Gastrocnemius medialis (tissue), 4 donors: ENCODE measurements at regions of chr12 and their contacts with region 1.

Region 1: DNA sequence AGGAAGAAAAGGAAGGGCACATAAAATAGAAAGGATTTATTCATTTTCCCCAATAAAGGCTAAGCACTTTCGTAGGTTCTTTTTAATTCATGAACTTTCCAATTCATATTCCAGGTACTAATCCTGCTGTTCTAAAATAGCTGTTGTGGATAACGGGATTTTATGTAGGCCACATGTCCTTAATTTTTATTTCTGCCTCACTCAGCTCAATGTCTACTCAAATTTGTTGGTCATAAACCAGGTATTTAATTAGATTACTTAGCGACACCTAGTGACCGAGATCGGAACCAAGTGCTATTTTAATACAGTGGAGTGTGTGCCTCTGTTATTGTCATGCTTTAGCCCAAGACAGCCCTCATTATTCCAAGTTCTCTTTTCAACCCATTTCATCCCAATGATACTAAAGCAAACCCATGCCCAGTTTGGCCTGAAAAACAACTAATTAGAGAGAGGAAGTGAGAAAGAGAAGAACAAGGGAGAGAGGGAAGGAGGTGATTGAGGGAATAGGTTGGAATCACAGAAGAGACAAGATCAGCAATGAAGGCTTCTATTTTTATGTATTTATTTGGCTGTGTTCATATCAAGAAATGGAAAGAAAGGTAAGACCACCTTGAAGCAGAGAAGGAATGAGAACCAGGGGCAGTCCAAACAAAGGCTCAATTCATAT is 45.9 kb upstream of the IFNG-AS1 start:
- DNase-seq: peak; percentile 37 to 46
- ATAC-seq: peak; percentile 85
- H3K4me3 ChIP-seq: no peak overlapping the region
- H3K27ac ChIP-seq: peak overlapping the region; percentile 30 to 54 (median 44)
- H3K4me1 ChIP-seq: peaks cover 27 to 38% of the 10 kb centered on the region in 2 donors
- H3K27me3 ChIP-seq: no peaks in the 10 kb centered on the region
- CTCF ChIP-seq: peak; percentile 53 to 83 (median 73)
- POLR2A ChIP-seq: no peak

Region 2: GRCh38 chr12:67433385-67434175 is 509.8 kb before region 1 on chr12:
- in situ Hi-C with region 1: loop called in 2 of 4 experiments (anchors 10 to 25 kb)
- intact Hi-C with region 1: no loop called
- DNase-seq: no peak
- ATAC-seq: no peak
- H3K4me3 ChIP-seq: no peak overlapping the region
- H3K27ac ChIP-seq: peak overlapping the region in 2 of 4 donors; percentile 12 to 80
- H3K4me1 ChIP-seq: peaks cover 25 to 26% of the 10 kb centered on the region in 2 donors
- H3K27me3 ChIP-seq: no peaks in the 10 kb centered on the region
- CTCF ChIP-seq: no peak
- POLR2A ChIP-seq: no peak

Region 3: DNA sequence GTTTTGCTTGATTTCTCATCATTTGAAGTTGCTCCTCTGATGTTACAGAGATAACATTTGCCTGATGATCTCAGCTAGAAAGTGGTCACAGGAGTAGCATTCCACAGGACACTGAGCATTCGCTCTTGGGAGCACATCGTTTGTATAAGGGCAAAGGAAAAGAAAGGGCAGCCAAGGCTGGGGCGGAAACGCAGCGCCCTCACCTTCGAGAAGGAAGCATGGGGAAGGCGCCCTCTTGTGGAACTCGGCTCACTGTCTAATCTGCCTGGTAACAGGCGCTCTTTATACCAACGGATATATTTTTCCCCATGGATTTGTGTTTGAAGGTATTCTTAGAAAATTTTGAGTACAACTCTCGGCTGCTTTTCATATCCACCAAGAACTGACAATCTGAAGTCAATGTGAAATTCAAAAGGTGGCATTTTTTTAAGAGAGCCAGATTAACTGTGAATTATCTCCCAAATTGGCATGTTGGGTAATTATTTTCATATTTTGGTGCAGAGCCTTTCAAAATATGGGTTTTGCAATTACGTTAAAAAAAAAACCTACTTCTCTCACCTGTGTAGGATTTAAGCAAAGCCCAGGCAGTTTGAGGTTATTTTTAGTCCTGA is 501.5 kb before region 1 on chr12:
- in situ Hi-C with region 1: loop called in 2 of 4 experiments (anchors 10 to 25 kb)
- intact Hi-C with region 1: loop called (anchors 5 kb)
- DNase-seq: peak; percentile 78 to 88
- ATAC-seq: peak; percentile 95 to 99
- H3K4me3 ChIP-seq: peak overlapping the region; percentile 45 to 55 (median 50)
- H3K27ac ChIP-seq: peak overlapping the region; percentile 70 to 86 (median 76)
- H3K4me1 ChIP-seq: peaks cover 13 to 18% of the 10 kb centered on the region in 2 donors
- H3K27me3 ChIP-seq: no peaks in the 10 kb centered on the region
- CTCF ChIP-seq: peak; percentile 69 to 86 (median 75)
- POLR2A ChIP-seq: no peak

Region 4: GRCh38 chr12:67509666-67510384 is 433.5 kb before region 1 on chr12:
- in situ Hi-C with region 1: no loop called
- intact Hi-C with region 1: loop called (anchors 10 kb)
- DNase-seq: no peak
- ATAC-seq: no peak
- H3K4me3 ChIP-seq: no peak overlapping the region
- H3K27ac ChIP-seq: no peak overlapping the region
- H3K4me1 ChIP-seq: peaks cover 9 to 12% of the 10 kb centered on the region in 2 donors
- H3K27me3 ChIP-seq: no peaks in the 10 kb centered on the region
- CTCF ChIP-seq: no peak
- POLR2A ChIP-seq: no peak

Region 5: GRCh38 chr12:67648521-67649260 is 294.7 kb before region 1 on chr12 and contains the start of gene DYRK2:
- in situ Hi-C with region 1: loop called in 2 of 4 experiments (anchors 10 to 25 kb)
- intact Hi-C with region 1: loop called (anchors 2 kb)
- DNase-seq: peak; percentile 56 to 78
- ATAC-seq: peak; percentile 51
- H3K4me3 ChIP-seq: peak within 1 kb of the TSS; percentile 94 to 98 (median 98)
- H3K27ac ChIP-seq: peak within 1 kb of the TSS; percentile 98 to 100 (median 99)
- H3K4me1 ChIP-seq: peaks cover 36 to 42% of the 10 kb centered on the region in 2 donors
- H3K27me3 ChIP-seq: no peaks in the 10 kb centered on the region
- CTCF ChIP-seq: peak in 3 of 5 experiments; percentile 14 to 18 (median 14)
- POLR2A ChIP-seq: peak; percentile 84 to 89
- total RNA-seq, gene DYRK2: 14.1 to 25.7 (median 15.9) TPM

Region 6: GRCh38 chr12:67827820-67828383 is 115.5 kb before region 1 on chr12:
- in situ Hi-C with region 1: no loop called
- intact Hi-C with region 1: loop called (anchors 5 kb)
- DNase-seq: peak; percentile 41 to 59
- ATAC-seq: peak; percentile 97 to 98
- H3K4me3 ChIP-seq: peak overlapping the region; percentile 41 to 51 (median 44)
- H3K27ac ChIP-seq: peak overlapping the region; percentile 82 to 88 (median 84)
- H3K4me1 ChIP-seq: peaks cover 15 to 18% of the 10 kb centered on the region in 2 donors
- H3K27me3 ChIP-seq: no peaks in the 10 kb centered on the region
- CTCF ChIP-seq: no peak
- POLR2A ChIP-seq: peak in 1 of 2 donors; percentile 32

Region 7: DNA sequence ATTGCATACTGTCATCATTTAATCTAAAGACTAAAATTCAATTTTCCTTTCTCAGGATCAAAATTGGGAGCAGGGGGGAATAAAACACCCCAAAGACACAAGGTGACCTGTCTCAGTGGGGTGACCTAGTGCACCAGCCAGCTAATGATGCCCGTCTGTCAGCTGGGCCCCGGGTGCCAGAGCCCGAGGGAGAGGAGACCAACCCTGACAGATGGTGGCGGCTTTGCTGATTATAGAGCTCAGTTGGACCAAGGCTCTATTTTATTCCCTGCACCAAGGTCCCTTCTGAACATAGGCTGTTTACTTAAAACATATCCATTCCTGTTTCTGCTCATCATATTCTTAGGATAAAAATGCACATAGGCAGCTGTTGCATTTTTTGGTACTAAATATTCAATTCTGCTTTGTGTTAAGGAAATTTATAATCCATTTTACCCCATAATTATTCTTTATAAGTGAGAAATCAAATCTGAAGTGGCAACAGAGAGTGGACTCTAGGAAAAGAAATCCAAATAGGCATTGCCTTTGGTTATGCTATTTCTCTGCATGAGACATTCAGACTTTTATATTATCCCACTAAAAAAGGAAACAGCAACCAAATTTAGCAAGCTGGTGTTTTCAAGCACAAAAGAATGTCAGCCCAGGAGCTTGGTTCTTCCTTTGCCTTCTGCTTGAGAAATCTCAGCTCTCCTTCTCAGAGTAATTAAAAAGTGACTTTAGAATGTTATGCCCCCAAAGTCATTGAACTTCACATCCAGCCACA is 50.9 kb before region 1 on chr12:
- in situ Hi-C with region 1: no loop called
- intact Hi-C with region 1: loop called (anchors 5 kb)
- DNase-seq: no peak
- ATAC-seq: no peak
- H3K4me3 ChIP-seq: no peak overlapping the region
- H3K27ac ChIP-seq: peak overlapping the region; percentile 52 to 69 (median 58)
- H3K4me1 ChIP-seq: peaks cover 23 to 34% of the 10 kb centered on the region in 2 donors
- H3K27me3 ChIP-seq: no peaks in the 10 kb centered on the region
- CTCF ChIP-seq: no peak
- POLR2A ChIP-seq: no peak